ENCODE measurements at regions of chr18 and their contacts with region 1.

Region 1: GRCh38 chr18:31042437-31043181 is at the start of gene DSC3:
- DNase-seq: peak; percentile 93
- H3K4me3 Mint-ChIP-seq: peak within 1 kb of the TSS; percentile 97
- H3K27ac Mint-ChIP-seq: peak within 1 kb of the TSS; percentile 98
- H3K4me1 Mint-ChIP-seq: peaks cover 45% of the 10 kb centered on the region
- H3K27me3 Mint-ChIP-seq: no peaks in the 10 kb centered on the region
- CTCF ChIP-seq: no peak
- total RNA-seq, gene DSC3: 56.2 and 60.8 TPM in 2 replicates

Region 2: GRCh38 chr18:31064130-31064529 is 21.5 kb after region 1 on chr18:
- CTCF ChIA-PET with region 1: no interaction called
- POLR2A ChIA-PET with region 1: interaction called, 46 read pairs
- intact Hi-C with region 1: no loop called
- DNase-seq: peak; percentile 77
- H3K4me3 Mint-ChIP-seq: no peak overlapping the region
- H3K27ac Mint-ChIP-seq: peak overlapping the region; percentile 10
- H3K4me1 Mint-ChIP-seq: peaks cover 19% of the 10 kb centered on the region
- H3K27me3 Mint-ChIP-seq: no peaks in the 10 kb centered on the region
- CTCF ChIP-seq: no peak

Region 3: DNA sequence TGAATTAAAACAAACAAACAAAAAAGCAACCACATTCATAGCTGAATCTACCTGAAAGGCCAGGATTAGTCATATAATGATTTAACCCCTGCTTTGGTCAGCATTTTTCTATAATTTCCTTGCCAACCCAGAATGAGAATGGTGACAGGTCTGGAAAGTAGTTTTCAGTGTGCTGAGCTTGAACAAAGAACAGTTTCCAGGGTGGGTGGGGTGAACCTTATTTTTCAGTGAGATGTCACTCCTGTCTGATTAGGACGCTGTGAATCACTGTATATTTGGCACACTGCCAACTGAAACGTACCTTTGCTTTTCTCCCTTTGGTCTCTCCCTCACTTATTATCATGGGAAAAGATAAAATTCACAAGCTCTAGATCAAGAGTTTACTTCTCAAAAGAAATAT is 155.1 kb after region 1 on chr18:
- CTCF ChIA-PET with region 1: interaction called, 3 read pairs
- POLR2A ChIA-PET with region 1: interaction called, 33 read pairs
- intact Hi-C with region 1: no loop called
- DNase-seq: peak; percentile 69
- H3K4me3 Mint-ChIP-seq: no peak overlapping the region
- H3K27ac Mint-ChIP-seq: no peak overlapping the region
- H3K4me1 Mint-ChIP-seq: peaks cover 20% of the 10 kb centered on the region
- H3K27me3 Mint-ChIP-seq: no peaks in the 10 kb centered on the region
- CTCF ChIP-seq: no peak

Region 4: GRCh38 chr18:31250902-31251301 is 208.3 kb after region 1 on chr18:
- CTCF ChIA-PET with region 1: no interaction called
- POLR2A ChIA-PET with region 1: interaction called, 165 read pairs
- intact Hi-C with region 1: no loop called
- DNase-seq: no peak
- H3K4me3 Mint-ChIP-seq: no peak overlapping the region
- H3K27ac Mint-ChIP-seq: no peak overlapping the region
- H3K4me1 Mint-ChIP-seq: peaks cover 25% of the 10 kb centered on the region
- H3K27me3 Mint-ChIP-seq: no peaks in the 10 kb centered on the region
- CTCF ChIP-seq: no peak

Region 5: DNA sequence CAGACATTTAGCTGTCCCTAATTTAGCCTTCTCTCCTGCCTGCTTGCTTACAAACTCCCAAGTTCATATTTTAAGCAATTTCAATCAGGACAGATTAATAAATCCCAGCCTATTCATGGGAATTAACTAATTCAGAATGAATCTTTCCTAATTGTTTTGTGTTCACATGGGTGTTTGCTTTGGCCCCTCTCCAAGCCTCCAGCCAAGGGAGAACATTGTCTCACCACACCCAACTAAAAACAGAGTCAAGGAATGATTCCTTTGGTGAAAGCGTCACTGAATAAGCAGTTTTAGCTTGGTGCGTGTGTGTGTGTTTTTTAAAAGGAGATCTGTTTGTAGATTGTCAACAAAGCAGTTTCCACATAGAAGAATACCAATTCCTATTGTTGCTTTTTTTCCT is 232.3 kb after region 1 on chr18:
- CTCF ChIA-PET with region 1: no interaction called
- POLR2A ChIA-PET with region 1: interaction called, 31 read pairs
- intact Hi-C with region 1: no loop called
- DNase-seq: peak; percentile 99
- H3K4me3 Mint-ChIP-seq: peak overlapping the region; percentile 59
- H3K27ac Mint-ChIP-seq: peak overlapping the region; percentile 97
- H3K4me1 Mint-ChIP-seq: peaks cover 34% of the 10 kb centered on the region
- H3K27me3 Mint-ChIP-seq: no peaks in the 10 kb centered on the region
- CTCF ChIP-seq: no peak

Region 6: GRCh38 chr18:31490387-31490786 is 447.8 kb after region 1 on chr18:
- CTCF ChIA-PET with region 1: no interaction called
- POLR2A ChIA-PET with region 1: interaction called, 12 read pairs
- intact Hi-C with region 1: no loop called
- DNase-seq: peak; percentile 73
- H3K4me3 Mint-ChIP-seq: no peak overlapping the region
- H3K27ac Mint-ChIP-seq: peak overlapping the region; percentile 65
- H3K4me1 Mint-ChIP-seq: peaks cover 49% of the 10 kb centered on the region
- H3K27me3 Mint-ChIP-seq: no peaks in the 10 kb centered on the region
- CTCF ChIP-seq: no peak